ENCODE measurements at regions of chr12 and their contacts with region 1.

Region 1: DNA sequence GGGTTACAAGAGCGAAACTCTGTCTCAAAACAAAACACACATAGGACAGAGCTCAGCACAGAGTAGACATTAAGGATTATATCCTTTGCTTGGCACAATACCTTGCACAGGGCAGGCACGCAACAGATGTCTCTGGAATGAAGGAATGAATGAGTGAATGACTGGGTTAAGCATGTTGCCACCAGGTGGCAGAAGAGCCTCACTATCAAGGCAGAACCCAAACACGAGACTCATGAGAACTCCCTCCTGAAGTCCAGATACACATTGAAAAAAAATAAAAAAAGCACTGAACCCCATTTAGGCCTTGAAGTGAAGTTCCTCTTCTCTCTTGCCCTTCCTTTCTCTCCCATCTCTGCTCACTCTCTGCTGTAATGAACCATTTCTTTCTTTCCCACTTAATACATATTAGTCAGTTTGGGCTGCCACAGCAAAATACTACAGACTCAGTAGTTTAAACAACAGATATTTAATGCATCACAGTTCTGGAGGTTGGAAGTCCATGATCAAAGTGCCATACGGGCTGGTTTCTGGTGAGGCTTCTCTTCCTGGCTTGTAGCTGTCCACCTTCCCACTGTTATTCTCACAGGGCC is 26.6 kb upstream of the LTA4H start:
- DNase-seq: peak in 2 of 3 donors; percentile 69 to 94
- ATAC-seq: peak; percentile 94
- H3K4me3 ChIP-seq: no peak overlapping the region
- H3K4me1 ChIP-seq: peaks cover 3% of the 10 kb centered on the region
- CTCF ChIP-seq: no peak

Region 2: GRCh38 chr12:96219698-96220206 is 157.8 kb after region 1 on chr12:
- intact Hi-C with region 1: loop called (anchors 2 to 5 kb)
- DNase-seq: peak in 1 of 3 donors; percentile 16
- ATAC-seq: no peak
- H3K4me3 ChIP-seq: no peak overlapping the region
- H3K4me1 ChIP-seq: peaks cover 5% of the 10 kb centered on the region
- CTCF ChIP-seq: no peak

Region 3: DNA sequence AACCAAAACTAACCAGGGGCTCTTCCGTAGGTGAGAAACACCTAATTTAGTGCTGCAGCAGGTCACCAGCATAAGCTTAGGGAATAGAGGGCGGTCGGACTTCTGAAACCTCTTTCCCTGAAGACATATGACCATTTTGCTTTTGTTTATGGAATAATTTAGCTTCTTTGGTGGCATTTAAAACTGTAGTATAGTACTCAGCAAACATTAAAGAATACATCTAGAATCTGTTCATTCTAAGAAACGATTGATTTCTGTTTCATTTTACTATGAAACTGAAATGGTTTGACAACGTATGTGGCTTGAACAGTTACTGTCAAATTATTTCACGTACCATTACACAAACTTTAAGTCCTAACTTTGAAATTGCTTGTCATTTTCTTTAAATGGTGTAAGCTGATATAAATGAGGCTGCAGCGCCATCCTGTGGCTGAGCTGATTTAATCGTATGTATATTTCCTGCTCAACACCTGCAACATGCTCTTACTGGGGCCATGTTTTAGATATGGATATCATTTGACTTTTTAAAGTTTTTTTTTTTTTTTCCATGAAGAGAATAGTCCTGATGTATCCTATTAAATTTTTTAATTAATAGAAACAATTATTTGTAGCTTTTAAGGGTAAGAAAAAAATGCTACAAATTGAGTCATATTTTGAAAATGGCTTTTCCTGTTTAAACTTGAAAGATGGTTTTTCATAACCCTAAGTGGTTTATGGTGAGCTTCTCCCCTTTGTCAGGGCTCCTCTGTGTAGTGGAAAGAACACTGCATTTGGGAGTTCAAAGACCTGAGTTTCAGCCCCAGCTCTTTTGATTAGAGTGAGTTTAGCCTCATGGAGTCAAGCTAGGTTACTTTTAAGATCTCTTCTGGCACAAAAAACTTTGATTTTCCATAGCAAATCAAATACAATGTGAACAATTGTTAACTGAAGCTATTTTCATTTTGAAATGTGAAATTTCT is 454.8 kb after region 1 on chr12:
- intact Hi-C with region 1: loop called (anchors 5 kb)
- DNase-seq: peak in 2 of 3 donors; percentile 71 to 92
- ATAC-seq: peak; percentile 81
- H3K4me3 ChIP-seq: no peak overlapping the region
- H3K4me1 ChIP-seq: no peaks in the 10 kb centered on the region
- CTCF ChIP-seq: no peak

Measured in mucosa of descending colon (tissue), 3 donors.